ENCODE measurements at regions of chr6 and their contacts with region 1.

Region 1: DNA sequence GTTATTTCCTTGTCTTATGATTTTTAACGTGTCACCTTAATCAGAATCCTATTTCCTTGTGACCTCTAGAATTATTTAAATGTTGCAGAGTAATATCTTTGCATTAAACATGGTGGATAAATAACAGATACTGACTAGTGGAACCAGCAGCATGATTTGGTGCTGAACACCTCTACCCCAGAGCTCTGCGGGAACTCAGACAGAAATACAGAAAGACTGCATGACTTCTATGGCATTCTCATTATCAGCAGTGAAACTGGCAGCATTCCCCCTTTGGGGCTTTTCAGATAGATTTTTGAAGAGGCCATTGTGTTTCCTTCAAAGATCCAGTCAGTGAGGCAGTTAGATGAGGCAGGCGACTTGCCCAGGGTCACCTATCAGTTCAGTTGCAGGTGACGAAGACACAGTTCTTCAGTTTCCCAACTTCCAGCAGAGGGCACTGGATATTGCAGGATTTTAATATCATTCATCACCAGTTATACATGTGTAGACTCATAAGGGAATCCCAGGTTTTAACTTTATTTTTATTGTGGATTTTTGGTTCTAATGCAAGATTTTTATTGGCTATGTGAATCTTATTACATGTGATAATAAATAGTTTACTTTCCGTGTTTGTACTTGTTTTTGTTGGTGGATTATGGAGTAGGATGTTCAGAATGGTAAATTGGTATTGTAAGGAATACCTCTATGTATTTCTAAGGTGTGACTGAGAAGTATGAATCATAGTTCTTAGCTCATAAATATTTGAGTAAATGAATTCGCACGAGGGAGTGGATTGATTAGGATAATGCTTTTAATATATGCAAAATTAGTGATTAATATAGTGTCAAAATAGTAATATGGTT is 81.3 kb downstream of the AFDN start:
- DNase-seq: peak; percentile 18
- ATAC-seq: peak; percentile 90
- H3K4me3 ChIP-seq: no peak overlapping the region
- H3K27ac ChIP-seq: no peak overlapping the region
- H3K4me1 ChIP-seq: no peaks in the 10 kb centered on the region
- H3K27me3 ChIP-seq: no peaks in the 10 kb centered on the region
- CTCF ChIP-seq: peak; percentile 49 to 59 (median 56); a peak in 5 of 6 replicates
- POLR2A ChIP-seq: no peak
- RAD21 ChIP-seq: peak; percentile 72

Region 2: DNA sequence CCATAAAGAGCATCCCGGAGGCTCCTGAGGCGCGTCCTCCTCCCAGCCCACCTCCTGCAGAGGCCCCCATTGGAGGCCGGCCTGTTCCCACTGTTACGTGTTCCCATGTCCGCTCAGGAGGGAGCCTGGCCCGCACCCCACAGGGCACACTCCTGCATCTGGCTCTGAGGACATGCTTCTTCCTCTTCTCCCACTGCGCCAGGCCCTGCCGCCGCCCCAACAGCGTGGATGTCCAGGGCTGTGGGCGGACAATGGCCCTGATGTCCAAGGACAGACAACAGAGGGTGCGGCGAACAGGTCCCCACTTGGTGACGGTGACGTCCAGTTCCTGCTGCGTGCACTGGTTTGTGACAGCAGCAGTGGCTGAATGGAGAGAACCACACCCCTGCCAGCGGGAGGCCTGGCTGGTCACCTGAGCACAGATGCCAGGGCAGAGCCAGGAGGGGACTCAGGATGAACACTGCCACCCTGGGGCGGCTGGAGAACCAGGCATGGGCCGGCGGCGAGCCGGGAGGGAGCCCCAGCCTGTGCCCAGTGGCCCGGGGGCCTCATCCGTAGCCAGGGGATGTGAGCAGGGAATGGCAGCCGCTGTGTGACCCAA is 144.3 kb after region 1 on chr6:
- CTCF ChIA-PET with region 1: no interaction called
- POLR2A ChIA-PET with region 1: no interaction called
- RAD21 ChIA-PET with region 1: no interaction called
- intact Hi-C with region 1: loop called (anchors 2 kb)
- DNase-seq: no peak
- ATAC-seq: peak; percentile 85
- H3K4me3 ChIP-seq: no peak overlapping the region
- H3K27ac ChIP-seq: no peak overlapping the region
- H3K4me1 ChIP-seq: peaks cover 0 to 4% of the 10 kb centered on the region in 2 experiments; a peak in 1 of 4 replicates
- H3K27me3 ChIP-seq: no peaks in the 10 kb centered on the region
- CTCF ChIP-seq: peak; percentile 6 to 21 (median 12); a peak in 1 of 6 replicates
- POLR2A ChIP-seq: no peak
- RAD21 ChIP-seq: peak; percentile 63

Region 3: DNA sequence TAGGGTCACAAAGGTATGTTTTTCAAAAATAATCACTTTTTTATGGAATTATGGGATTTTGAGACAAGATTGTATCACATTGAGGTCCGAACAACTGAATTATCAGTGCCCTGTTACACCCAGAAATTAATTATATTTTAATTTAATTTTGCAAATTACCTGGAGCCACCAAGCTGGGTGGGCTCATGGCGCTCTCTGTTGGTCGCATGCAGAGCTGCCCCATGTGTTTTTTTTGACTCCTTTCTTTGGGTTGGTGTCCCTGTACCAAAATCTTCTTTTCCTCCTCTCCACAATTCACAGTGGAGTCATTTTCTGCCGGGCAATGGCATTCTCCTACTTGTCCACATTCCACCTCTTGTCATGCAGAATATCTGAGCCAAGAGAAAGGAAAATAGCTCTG is 209.9 kb after region 1 on chr6:
- CTCF ChIA-PET with region 1: interaction called, 3 read pairs
- POLR2A ChIA-PET with region 1: no interaction called
- RAD21 ChIA-PET with region 1: no interaction called
- intact Hi-C with region 1: loop called (anchors 1 kb)
- DNase-seq: no peak
- ATAC-seq: no peak
- H3K4me3 ChIP-seq: no peak overlapping the region
- H3K27ac ChIP-seq: no peak overlapping the region
- H3K4me1 ChIP-seq: no peaks in the 10 kb centered on the region
- H3K27me3 ChIP-seq: no peaks in the 10 kb centered on the region
- CTCF ChIP-seq: peak; percentile 50 to 57 (median 52)
- POLR2A ChIP-seq: no peak
- RAD21 ChIP-seq: peak; percentile 70

Region 4: GRCh38 chr6:168132531-168133167 is 224.6 kb after region 1 on chr6:
- CTCF ChIA-PET with region 1: no interaction called
- POLR2A ChIA-PET with region 1: no interaction called
- RAD21 ChIA-PET with region 1: no interaction called
- intact Hi-C with region 1: loop called (anchors 1 kb)
- DNase-seq: no peak
- ATAC-seq: peak; percentile 78
- H3K4me3 ChIP-seq: no peak overlapping the region
- H3K27ac ChIP-seq: no peak overlapping the region
- H3K4me1 ChIP-seq: no peaks in the 10 kb centered on the region
- H3K27me3 ChIP-seq: peaks cover 6% of the 10 kb centered on the region; the same call in 1 of the 2 replicates
- CTCF ChIP-seq: peak; percentile 29 to 39 (median 32); a peak in 5 of 6 replicates
- POLR2A ChIP-seq: no peak
- RAD21 ChIP-seq: peak; percentile 60

Region 5: DNA sequence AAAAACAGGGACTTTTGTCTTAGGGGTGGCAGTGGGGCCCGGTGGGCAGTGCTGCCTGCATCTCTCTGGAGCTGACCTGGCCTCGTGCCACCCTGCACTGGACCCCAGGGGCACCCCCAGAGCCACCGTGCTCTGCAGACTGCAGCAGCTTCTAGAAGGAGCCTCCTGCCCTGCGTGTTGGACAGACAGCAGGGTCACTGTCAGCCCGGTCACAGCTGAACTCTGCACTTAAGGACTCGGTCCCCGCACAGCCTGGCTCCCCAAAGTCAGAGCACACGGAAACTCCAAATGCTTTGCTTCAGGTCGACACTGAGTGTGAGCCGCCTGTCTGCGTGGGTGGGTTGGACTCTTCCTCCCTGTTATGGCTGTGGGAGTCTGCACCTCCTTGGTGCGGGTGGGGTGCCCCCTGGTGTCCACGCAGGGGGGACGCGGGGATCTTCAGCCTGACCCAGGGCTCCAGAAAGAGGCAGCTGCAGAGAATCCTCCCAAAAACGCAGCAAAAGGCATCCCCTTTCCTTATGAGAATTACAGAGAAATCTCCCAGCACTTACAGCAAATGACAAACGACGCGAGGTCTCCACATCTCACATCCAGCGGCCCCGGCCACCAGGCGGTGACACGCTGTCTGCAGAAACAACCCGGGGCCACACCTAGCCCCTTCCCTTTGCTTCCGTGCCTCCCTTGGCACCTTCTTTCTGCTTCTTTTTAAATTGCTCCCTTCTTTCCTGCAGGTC is 447.8 kb after region 1 on chr6:
- CTCF ChIA-PET with region 1: no interaction called
- POLR2A ChIA-PET with region 1: no interaction called
- RAD21 ChIA-PET with region 1: no interaction called
- intact Hi-C with region 1: loop called (anchors 5 kb)
- DNase-seq: peak; percentile 10
- ATAC-seq: peak; percentile 99
- H3K4me3 ChIP-seq: no peak overlapping the region
- H3K27ac ChIP-seq: no peak overlapping the region
- H3K4me1 ChIP-seq: no peaks in the 10 kb centered on the region; a peak in 1 of 4 replicates
- H3K27me3 ChIP-seq: no peaks in the 10 kb centered on the region
- CTCF ChIP-seq: peak; percentile 69 to 75 (median 71); a peak in 5 of 6 replicates
- POLR2A ChIP-seq: no peak
- RAD21 ChIP-seq: peak; percentile 80

Region 6: DNA sequence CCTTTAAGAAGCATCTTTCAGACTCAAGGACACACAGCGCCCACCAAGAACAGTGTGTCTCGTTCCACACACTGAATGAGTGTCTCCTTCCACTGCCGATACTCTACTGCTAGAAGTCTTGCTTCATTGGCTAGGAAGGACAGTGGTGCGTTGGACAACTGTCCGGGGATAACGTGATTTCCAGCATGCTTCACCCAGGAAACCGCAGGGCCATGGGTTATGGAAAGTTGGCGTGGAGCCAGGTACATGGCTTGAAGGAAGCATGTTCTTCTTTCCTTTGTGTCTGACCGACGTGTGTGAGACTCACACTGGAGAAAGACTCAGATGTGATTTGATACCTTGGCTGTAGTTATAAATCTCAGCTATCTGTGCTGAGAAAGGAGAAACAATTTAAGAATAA is 606.2 kb after region 1 on chr6:
- CTCF ChIA-PET with region 1: no interaction called
- POLR2A ChIA-PET with region 1: no interaction called
- RAD21 ChIA-PET with region 1: no interaction called
- intact Hi-C with region 1: no loop called
- DNase-seq: no peak
- ATAC-seq: no peak
- H3K4me3 ChIP-seq: no peak overlapping the region
- H3K27ac ChIP-seq: no peak overlapping the region
- H3K4me1 ChIP-seq: no peaks in the 10 kb centered on the region
- H3K27me3 ChIP-seq: peaks cover 16% of the 10 kb centered on the region
- CTCF ChIP-seq: no peak
- POLR2A ChIP-seq: no peak
- RAD21 ChIP-seq: no peak